ENCODE measurements at regions of chr17 and their contacts with region 1.

Region 1: GRCh38 chr17:7561028-7561575 is 617 bp upstream of the SENP3 start:
- DNase-seq: peak; percentile 91 to 92
- ATAC-seq: peak; percentile 66 to 86 (median 78)
- H3K4me3 ChIP-seq: peak overlapping the region; percentile 84 to 100 (median 96)
- H3K27ac ChIP-seq: peak overlapping the region; percentile 83 to 99 (median 94)
- H3K4me1 ChIP-seq: peaks cover 41 to 73% (median 69%) of the 10 kb centered on the region in 9 donors
- H3K27me3 ChIP-seq: no peaks in the 10 kb centered on the region
- CTCF ChIP-seq: peak; percentile 80 to 93 (median 87)

Region 2: DNA sequence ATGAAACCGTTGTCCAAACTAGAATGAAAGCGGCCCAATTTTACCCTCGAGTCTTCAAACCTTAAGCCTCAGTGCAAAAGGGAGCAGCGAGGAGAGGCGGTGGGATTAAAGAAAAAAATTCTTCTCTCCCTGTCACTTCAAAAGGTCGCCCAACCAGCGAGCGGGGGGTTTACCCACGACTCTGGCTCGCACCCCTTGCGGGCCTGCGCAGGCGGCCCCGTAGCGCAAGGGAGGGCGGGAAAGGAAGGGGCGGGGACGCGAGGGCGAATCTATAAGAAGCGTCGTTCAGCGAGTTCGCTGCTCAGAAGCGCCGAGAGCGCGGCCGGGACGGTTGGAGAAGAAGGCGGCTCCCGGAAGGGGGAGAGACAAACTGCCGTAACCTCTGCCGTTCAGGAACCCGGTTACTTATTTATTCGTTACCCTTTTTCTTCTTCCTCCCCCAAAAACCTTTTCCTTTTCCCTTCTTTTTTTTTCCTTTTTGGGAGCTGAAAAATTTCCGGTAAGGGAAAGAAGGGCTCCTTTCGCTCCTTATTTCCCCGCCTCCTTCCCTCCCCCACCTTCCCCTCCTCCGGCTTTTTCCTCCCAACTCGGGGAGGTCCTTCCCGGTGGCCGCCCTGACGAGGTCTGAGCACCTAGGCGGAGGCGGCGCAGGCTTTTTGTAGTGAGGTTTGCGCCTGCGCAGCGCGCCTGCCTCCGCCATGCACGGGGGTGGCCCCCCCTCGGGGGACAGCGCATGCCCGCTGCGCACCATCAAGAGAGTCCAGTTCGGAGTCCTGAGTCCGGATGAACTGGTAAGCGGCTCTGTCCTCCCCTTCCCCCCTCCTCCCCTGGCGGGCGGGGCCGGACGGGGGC is 76.8 kb before region 1 on chr17 and contains the start of gene POLR2A:
- intact Hi-C with region 1: loop called in 3 of 10 experiments (anchors 2 kb)
- DNase-seq: peak; percentile 98 to 99
- ATAC-seq: peak; percentile 84 to 93 (median 88)
- H3K4me3 ChIP-seq: peak within 1 kb of the TSS; percentile 55 to 87 (median 68)
- H3K27ac ChIP-seq: peak within 1 kb of the TSS; percentile 91 to 100 (median 100)
- H3K4me1 ChIP-seq: peaks cover 22 to 78% (median 60%) of the 10 kb centered on the region in 9 donors
- H3K27me3 ChIP-seq: no peaks in the 10 kb centered on the region
- CTCF ChIP-seq: no peak
- total RNA-seq, gene POLR2A: 40.5 to 61.7 (median 48.8) TPM

Region 3: DNA sequence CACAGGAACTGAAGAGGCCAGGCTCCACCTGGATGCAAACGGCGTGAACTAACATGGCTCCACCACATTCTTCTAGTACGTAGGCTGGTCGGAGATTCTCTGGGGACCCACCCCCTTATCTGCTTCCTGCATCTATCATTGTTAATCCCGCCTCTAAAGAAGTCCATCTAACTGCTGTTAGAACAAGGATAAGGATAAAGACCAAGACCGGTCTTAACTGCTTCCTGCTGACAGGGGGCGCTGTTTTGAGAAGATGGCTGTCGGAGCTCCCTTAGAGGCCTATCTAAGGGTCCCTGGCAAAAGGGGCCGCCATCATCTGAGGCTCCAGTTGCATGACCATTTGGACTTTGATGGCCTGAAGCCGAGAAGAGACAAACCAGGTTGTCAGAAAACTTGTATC is 38.1 kb before region 1 on chr17:
- intact Hi-C with region 1: loop called in 3 of 10 experiments (anchors 2 to 10 kb)
- DNase-seq: no peak
- ATAC-seq: peak in 6 of 8 donors; percentile 16 to 73 (median 44)
- H3K4me3 ChIP-seq: no peak overlapping the region
- H3K27ac ChIP-seq: no peak overlapping the region
- H3K4me1 ChIP-seq: peaks cover 0 to 5% (median 0%) of the 10 kb centered on the region in 9 donors
- H3K27me3 ChIP-seq: no peaks in the 10 kb centered on the region
- CTCF ChIP-seq: peak in 8 of 9 donors; percentile 34 to 64 (median 56)